K562 (cell line): ENCODE measurements at regions of chr2 and their contacts with region 1.

Region 1: DNA sequence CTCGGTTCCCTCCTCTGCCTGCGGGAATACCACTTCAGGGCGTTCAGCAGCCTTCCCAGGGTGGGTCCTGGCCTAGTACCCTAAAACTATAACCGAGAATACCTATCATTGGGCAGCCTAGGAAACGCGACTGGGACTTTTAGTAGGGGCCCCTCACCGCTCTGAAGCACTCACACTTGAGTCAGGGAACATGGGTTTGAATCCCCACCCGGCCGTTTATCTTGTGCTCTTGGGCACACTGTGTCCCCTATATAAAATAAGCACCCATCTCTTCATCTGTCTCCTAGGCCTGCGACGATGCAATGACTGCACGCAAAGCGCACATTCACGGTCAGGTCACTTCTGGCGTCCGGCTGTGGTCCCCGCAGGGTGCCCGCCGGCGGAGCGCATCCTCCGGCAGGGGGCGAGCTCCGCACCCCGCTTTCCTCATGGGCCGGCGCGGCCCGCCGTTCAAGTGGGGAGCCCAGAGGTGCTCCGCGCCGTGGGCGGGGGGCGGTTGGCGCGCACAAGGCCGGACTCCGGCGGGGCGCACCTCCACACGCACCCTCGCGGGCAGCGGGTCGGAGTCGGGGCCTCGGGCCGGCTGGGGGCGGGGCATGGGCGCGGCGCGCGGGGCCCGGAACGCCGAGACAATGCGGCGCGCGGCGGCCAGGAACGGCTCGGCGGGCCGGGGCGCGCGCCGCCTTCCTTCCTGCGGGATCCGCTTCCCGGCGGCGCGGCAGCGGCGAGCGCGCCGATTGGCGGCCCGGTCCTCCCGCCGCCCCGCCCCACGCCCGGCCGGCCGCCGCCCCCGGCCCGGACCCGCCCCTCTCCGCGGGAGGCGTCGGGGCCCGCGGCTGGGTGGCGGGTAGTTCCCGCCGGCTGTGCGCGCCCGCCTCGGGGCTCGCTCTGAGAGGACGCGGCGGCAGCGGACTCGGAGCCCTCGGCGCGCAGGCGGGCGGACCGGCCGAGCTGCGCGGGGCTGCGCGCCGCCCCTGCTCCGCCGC is at the start of gene ASAP2:
- DNase-seq: peak; percentile 84 to 97 (median 96)
- ATAC-seq: peak; percentile 85
- H3K4me3 ChIP-seq: peak within 1 kb of the TSS; percentile 69
- H3K27ac ChIP-seq: peak within 1 kb of the TSS; percentile 71
- H3K4me1 ChIP-seq: peaks cover 19 to 23% of the 10 kb centered on the region in 2 experiments; a peak in 4 of 5 replicates
- H3K27me3 ChIP-seq: no peaks in the 10 kb centered on the region
- CTCF ChIP-seq: peak; percentile 76 to 80 (median 80)
- EP300 ChIP-seq: no peak
- POLR2A ChIP-seq: 0 out of 2 replicates have a peak, but pooled peaks have one; percentile 37
- RAD21 ChIP-seq: peak; percentile 64 to 75
- polyA plus RNA-seq, gene ASAP2: 0.06 to 0.07 TPM

Region 2: DNA sequence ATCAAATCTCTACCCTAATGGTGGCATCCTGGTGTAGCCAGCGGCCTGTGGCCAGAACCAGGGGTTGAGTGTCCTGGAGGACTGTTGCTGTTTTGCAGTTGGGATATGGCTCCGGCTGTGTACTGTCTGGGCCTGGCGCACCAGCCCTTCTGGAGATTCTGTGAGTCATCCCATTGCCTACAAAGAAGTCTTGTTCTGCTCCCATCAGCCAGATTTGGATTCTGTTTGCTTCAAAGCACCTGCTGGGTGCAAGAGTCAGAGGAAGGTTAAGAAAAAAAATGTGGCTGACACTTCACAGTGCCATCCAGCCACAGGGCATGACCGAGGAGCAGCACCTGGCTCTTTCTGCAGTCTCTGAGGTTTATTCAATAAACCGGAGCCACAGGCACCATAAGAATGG is 40.6 kb before region 1 on chr2:
- CTCF ChIA-PET with region 1: no interaction called
- POLR2A ChIA-PET with region 1: interaction called, 3 read pairs
- in situ Hi-C with region 1: no loop called
- intact Hi-C with region 1: loop called (anchors 2 kb)
- DNase-seq: no peak
- ATAC-seq: no peak
- H3K4me3 ChIP-seq: no peak overlapping the region
- H3K27ac ChIP-seq: no peak overlapping the region
- H3K4me1 ChIP-seq: peaks cover 8 to 21% of the 10 kb centered on the region in 2 experiments
- H3K27me3 ChIP-seq: peaks cover 4 to 30% of the 10 kb centered on the region in 2 experiments; a peak in 4 of 5 replicates
- CTCF ChIP-seq: no peak
- EP300 ChIP-seq: no peak
- POLR2A ChIP-seq: no peak
- RAD21 ChIP-seq: no peak

Region 3: DNA sequence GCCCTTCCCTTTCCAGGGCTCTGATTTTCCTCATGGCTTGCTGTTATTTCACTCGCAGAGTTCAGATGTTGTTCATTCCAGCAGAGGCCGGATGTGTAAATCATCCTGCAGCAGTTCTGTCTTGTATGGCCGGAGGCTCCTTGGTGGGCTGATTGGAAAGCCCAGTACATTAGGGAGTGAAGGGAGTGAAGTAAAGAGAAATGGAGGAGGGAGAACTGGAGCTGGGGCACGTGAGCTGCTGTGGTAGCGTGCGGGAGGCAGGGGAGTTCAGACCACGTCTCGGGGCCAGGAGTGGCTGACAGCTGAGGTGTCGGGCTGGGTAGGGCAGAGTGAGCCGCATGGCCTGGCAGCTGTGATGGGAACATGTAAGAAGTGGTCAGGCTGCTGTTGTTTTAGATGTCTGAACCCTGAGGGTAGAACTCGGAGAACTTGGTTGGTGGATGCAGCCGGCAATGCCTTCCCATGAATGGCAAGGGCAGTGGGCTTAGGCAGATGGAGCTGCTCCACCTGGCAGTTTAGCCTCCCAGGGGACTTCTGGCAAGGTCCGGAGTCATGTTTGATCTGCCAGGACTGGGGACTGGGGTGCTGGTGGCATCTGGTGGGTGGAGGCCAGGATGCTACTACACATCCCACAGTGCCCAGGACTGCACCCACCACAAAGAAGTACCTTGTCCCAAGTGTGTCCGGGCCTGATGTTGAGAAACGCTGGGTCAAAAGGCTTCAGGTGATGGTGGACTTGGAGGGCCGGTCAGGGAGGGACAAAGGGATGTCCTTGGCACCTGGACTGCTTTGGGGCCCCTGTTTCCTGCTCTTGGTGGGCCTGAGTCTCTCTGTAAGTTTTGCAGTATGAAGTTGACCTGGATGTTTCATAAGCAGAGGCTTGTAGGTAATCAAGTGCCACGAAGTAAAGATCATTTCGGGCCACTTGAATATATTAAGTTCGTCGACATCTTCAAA is 29.4 kb after region 1 on chr2:
- CTCF ChIA-PET with region 1: no interaction called
- POLR2A ChIA-PET with region 1: no interaction called
- in situ Hi-C with region 1: no loop called
- intact Hi-C with region 1: no loop called
- DNase-seq: no peak
- ATAC-seq: no peak
- H3K4me3 ChIP-seq: no peak overlapping the region
- H3K27ac ChIP-seq: peak overlapping the region; percentile 59; the same call in 2 of the 3 replicates
- H3K4me1 ChIP-seq: peaks cover 8 to 26% of the 10 kb centered on the region in 2 experiments
- H3K27me3 ChIP-seq: peaks cover 6 to 22% of the 10 kb centered on the region in 2 experiments; a peak in 4 of 5 replicates
- CTCF ChIP-seq: no peak
- EP300 ChIP-seq: no peak
- POLR2A ChIP-seq: no peak
- RAD21 ChIP-seq: no peak

Region 4: DNA sequence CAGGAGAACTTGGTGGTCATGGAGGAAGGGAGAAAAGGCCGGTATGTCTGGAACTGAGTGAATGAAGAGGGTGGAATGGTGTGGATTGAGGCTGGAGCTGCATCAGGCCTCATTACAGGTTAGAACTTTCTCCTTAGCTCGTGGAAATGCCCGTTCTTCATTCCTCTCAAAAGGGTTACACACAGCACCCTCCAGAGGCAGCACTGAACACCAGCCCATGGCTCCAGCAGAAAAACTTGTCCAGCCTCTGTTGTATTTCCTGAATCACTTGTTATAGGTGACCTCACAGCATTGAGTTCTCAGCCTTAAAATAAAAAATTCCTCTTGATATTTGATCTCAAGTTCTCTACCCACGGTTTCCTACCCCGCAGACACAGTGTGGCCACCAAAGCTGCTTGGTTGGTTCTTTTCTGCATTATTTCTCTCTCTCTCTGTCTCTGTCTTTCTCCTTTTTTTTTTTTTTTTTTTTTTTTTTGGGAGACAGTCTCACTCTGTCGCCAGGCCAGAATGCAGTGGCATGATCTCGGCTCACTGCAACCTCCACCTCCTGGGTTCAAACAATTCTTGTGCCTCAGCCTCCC is 127.4 kb after region 1 on chr2:
- CTCF ChIA-PET with region 1: no interaction called
- POLR2A ChIA-PET with region 1: no interaction called
- in situ Hi-C with region 1: no loop called
- intact Hi-C with region 1: loop called (anchors 1 kb)
- DNase-seq: peak; percentile 35 to 79 (median 46)
- ATAC-seq: peak; percentile 83
- H3K4me3 ChIP-seq: no peak overlapping the region
- H3K27ac ChIP-seq: no peak overlapping the region
- H3K4me1 ChIP-seq: peaks cover 18 to 37% of the 10 kb centered on the region in 2 experiments
- H3K27me3 ChIP-seq: no peaks in the 10 kb centered on the region; a peak in 1 of 5 replicates
- CTCF ChIP-seq: peak; percentile 70 to 88 (median 79)
- EP300 ChIP-seq: no peak
- POLR2A ChIP-seq: no peak
- RAD21 ChIP-seq: peak; percentile 76 to 84

Region 5: GRCh38 chr2:9423100-9423921 is 217.1 kb after region 1 on chr2 and contains the starts of genes CPSF3 and ITGB1BP1:
- CTCF ChIA-PET with region 1: no interaction called
- POLR2A ChIA-PET with region 1: interaction called, 4 read pairs
- in situ Hi-C with region 1: no loop called
- intact Hi-C with region 1: loop called (anchors 5 kb)
- DNase-seq: peak; percentile 99
- ATAC-seq: peak; percentile 93
- H3K4me3 ChIP-seq: peak within 1 kb of the TSS; percentile 90
- H3K27ac ChIP-seq: peak within 1 kb of the TSS; percentile 90
- H3K4me1 ChIP-seq: peaks cover 19 to 29% of the 10 kb centered on the region in 2 experiments; a peak in 4 of 5 replicates
- H3K27me3 ChIP-seq: no peaks in the 10 kb centered on the region
- CTCF ChIP-seq: peak in 2 of 3 experiments; percentile 1 to 24; a peak in 1 of 6 replicates
- EP300 ChIP-seq: no peak
- POLR2A ChIP-seq: peak; percentile 87
- RAD21 ChIP-seq: 0 out of 4 replicates have a peak, but pooled peaks of 1 of the 2 experiments have one; percentile 2
- polyA plus RNA-seq, gene CPSF3: 98.4 to 151 TPM
- polyA plus RNA-seq, gene ITGB1BP1: 37.8 to 50.4 TPM